PC-9 (cell line): ENCODE measurements at regions of chr12 and their contacts with region 1.

Region 1: DNA sequence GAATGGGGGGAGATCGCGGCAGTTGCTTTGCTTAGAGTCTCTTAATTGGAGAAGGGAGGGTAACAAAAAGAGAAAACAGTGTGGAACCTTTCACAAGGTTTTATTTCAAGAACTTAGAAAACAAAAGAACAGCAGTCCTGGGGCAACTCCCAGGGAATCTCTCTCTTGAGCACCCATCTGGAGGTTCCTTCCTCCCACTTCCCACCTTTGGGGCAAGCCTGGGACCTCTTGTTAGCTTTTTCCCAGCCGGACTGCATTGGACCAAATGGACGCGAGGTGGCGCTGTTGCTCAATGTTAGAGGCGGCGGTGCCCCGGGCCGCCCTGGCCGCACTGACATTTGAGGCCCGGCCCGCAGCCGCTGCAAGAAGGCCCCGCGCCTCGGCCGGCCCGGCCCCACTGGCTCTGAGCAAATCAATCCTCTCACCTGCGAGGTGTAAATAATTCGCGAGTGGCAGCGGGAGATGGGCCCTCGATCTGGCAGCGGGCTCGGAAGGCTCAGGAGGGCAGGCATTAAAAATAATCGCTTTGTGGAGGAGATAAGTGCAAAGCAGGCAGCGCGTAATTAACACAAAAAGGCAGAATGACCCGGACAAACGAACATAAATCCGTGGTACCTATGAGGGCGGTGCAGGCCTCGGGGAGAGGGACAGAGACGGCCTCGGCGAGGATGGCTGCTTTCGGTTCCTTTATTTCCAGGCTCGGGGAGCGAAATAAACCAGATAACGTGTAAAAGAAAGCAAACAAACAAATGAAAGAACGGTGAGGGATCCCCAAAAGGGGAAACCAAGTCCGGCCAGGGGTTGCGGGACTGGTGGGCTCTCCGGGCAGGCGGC is 2.7 kb upstream of the HOXC8 start:
- DNase-seq: peak; percentile 55 to 85
- H3K4me3 ChIP-seq: no peak overlapping the region
- H3K27ac ChIP-seq: no peak overlapping the region
- H3K4me1 ChIP-seq: no peaks in the 10 kb centered on the region
- H3K27me3 ChIP-seq: no peaks in the 10 kb centered on the region
- CTCF ChIP-seq: peak; percentile 94

Region 2: DNA sequence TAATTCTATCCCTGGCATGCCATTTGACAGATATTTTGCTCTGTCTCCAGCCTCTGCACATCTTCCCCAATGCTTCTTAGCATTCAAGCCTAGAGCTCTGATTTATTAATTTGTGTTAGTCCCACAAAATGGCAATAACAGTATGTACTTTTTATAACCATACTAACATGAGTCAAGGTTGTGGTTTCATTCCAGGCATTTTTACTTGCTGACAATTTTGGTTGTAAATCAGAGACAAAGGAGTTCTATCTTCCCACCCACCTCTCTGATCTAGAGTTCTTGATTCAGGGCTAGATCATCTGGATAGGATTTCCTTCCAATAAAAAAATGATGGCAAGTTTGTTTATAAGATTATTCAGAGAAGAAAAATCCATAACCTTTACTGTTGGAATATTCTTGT is 235.8 kb before region 1 on chr12:
- CTCF ChIA-PET with region 1: no interaction called
- POLR2A ChIA-PET with region 1: no interaction called
- intact Hi-C with region 1: loop called (anchors 1 kb)
- DNase-seq: peak in 1 of 2 experiments; percentile 92
- H3K4me3 ChIP-seq: no peak overlapping the region
- H3K27ac ChIP-seq: peak overlapping the region; percentile 53
- H3K4me1 ChIP-seq: peaks cover 39% of the 10 kb centered on the region
- H3K27me3 ChIP-seq: no peaks in the 10 kb centered on the region
- CTCF ChIP-seq: no peak

Region 3: GRCh38 chr12:53952871-53953734 is 53.0 kb before region 1 on chr12:
- CTCF ChIA-PET with region 1: no interaction called
- POLR2A ChIA-PET with region 1: no interaction called
- intact Hi-C with region 1: no loop called
- DNase-seq: peak; percentile 77 to 85
- H3K4me3 ChIP-seq: peak overlapping the region; percentile 54
- H3K27ac ChIP-seq: no peak overlapping the region
- H3K4me1 ChIP-seq: peaks cover 23% of the 10 kb centered on the region
- H3K27me3 ChIP-seq: no peaks in the 10 kb centered on the region
- CTCF ChIP-seq: no peak

Region 4: GRCh38 chr12:53984901-53985709 is 21.0 kb before region 1 on chr12 and contains the start of gene HOXC10:
- CTCF ChIA-PET with region 1: no interaction called
- POLR2A ChIA-PET with region 1: no interaction called
- intact Hi-C with region 1: no loop called
- DNase-seq: peak; percentile 58 to 77
- H3K4me3 ChIP-seq: peak within 1 kb of the TSS; percentile 8; the same call in 1 of the 2 replicates
- H3K27ac ChIP-seq: no peak within 1 kb of the TSS
- H3K4me1 ChIP-seq: peaks cover 22% of the 10 kb centered on the region
- H3K27me3 ChIP-seq: no peaks in the 10 kb centered on the region
- CTCF ChIP-seq: peak; percentile 68
- total RNA-seq, gene HOXC10: 1.1 and 1.4 TPM in 2 replicates

Region 5: DNA sequence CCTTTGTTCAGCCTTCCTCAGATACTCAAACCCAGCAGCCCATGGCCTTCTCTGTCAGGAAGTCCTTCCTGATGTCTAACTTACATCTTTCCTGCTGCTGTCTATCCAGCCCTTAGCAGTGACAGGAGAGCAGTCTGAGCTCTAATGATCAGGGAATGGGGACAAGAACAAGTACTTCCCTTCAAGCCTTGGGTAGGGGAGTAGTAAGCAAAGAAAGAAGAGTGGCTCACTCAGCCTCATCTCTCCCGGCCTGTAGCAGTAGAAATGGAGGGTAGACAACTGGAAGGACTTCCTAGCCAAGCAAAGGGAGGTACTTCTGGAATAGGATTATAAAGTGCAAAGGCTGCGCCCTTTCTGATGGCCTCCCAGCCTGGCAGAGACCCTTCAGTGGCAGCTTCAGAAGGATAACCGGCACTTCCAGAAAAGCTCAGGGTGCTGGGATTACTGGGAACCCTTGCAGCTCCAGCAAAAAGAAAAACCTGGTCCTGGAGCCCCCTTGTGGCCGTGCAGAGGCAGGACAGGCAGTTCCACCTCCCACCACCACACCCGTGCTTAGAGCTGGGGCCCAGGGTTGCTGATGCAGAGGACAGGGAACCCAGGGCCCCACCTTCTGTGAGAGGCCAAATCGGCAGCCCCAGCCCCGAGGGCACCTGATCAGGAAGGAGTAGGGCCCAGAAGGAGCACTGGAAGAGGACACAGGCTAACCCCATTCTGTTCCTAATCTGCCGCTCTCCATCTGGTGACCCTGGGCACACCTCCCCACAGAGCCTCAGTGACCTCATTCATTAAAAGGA is 195.1 kb after region 1 on chr12:
- CTCF ChIA-PET with region 1: interaction called, 12 read pairs
- POLR2A ChIA-PET with region 1: no interaction called
- intact Hi-C with region 1: no loop called
- DNase-seq: peak; percentile 52 to 75
- H3K4me3 ChIP-seq: no peak overlapping the region
- H3K27ac ChIP-seq: no peak overlapping the region
- H3K4me1 ChIP-seq: 0 out of 2 replicates have a peak, but pooled peaks cover under 1% of the 10 kb centered on the region
- H3K27me3 ChIP-seq: no peaks in the 10 kb centered on the region
- CTCF ChIP-seq: peak; percentile 93

Region 6: GRCh38 chr12:54216797-54217661 is 211.0 kb after region 1 on chr12:
- CTCF ChIA-PET with region 1: interaction called, 21 read pairs
- POLR2A ChIA-PET with region 1: no interaction called
- intact Hi-C with region 1: no loop called
- DNase-seq: peak; percentile 62 to 74
- H3K4me3 ChIP-seq: peak overlapping the region; percentile 49; the same call in 1 of the 2 replicates
- H3K27ac ChIP-seq: no peak overlapping the region
- H3K4me1 ChIP-seq: peaks cover 4% of the 10 kb centered on the region
- H3K27me3 ChIP-seq: no peaks in the 10 kb centered on the region
- CTCF ChIP-seq: peak; percentile 89